Mucosa of descending colon (tissue), 3 donors: ENCODE measurements at regions of chr15 and their contacts with region 1.

Region 1: GRCh38 chr15:101264911-101265641 is 12.2 kb downstream of the SELENOS start:
- DNase-seq: no peak
- ATAC-seq: peak; percentile 11
- H3K4me3 ChIP-seq: no peak overlapping the region
- H3K4me1 ChIP-seq: no peaks in the 10 kb centered on the region
- CTCF ChIP-seq: no peak

Region 2: DNA sequence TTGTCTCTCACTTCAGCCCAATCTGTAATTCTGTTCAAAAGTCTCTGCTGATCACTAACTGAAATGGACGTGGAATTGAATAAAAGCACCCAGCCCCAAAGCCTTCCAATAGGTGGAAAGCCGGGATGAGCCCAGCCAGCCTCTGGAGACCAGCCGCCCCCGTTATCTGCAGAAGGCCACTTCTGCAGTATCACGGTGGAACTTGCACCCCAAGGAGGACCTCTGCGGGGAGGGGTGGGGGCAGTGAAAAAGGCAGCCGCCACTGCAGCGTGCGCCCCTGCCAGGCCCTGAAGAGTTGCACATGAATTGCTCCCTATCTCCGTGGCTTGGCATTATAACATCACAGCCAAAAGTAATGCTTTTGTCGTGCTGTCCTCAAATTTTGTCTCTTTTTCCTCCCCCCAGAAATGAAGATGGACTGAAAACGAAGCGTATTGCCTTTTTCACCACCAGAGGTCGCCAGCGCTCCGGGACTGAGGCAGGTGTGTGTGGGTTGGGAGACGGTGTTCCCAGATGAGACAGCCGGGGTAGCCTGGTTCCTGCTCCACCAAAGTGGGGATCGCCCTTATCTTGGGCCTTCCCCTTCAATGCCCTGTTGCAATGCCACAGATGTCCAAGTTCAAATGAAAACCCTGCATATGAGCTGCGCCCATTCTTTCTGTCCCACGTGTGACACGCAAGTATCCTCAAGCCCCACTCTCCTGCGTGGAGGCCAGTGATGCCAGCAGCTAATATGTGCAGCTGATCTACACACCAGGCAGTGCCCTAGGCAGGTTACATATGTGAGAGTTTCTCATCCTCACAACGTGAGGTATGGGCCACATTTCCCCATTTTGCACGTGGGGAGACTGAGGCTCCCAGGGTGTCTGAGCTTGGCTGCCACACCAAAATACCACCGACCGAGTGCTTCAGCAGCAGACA is 249.9 kb before region 1 on chr15:
- intact Hi-C with region 1: loop called in 1 of 2 experiments (anchors 5 kb)
- DNase-seq: peak in 2 of 3 donors; percentile 73 to 81
- ATAC-seq: peak; percentile 75
- H3K4me3 ChIP-seq: no peak overlapping the region
- H3K4me1 ChIP-seq: no peaks in the 10 kb centered on the region
- CTCF ChIP-seq: peak; percentile 63

Region 3: GRCh38 chr15:101088788-101089583 is 176.1 kb before region 1 on chr15:
- intact Hi-C with region 1: no loop called
- DNase-seq: peak; percentile 73 to 88 (median 88)
- ATAC-seq: peak; percentile 94
- H3K4me3 ChIP-seq: no peak overlapping the region
- H3K4me1 ChIP-seq: peaks cover 3% of the 10 kb centered on the region
- CTCF ChIP-seq: peak; percentile 99

Region 4: GRCh38 chr15:101206176-101206591 is 58.9 kb before region 1 on chr15:
- intact Hi-C with region 1: no loop called
- DNase-seq: no peak
- ATAC-seq: peak; percentile 37
- H3K4me3 ChIP-seq: no peak overlapping the region
- H3K4me1 ChIP-seq: peaks cover 16% of the 10 kb centered on the region
- CTCF ChIP-seq: no peak

Region 5: GRCh38 chr15:101296418-101297415 is 31.6 kb after region 1 on chr15:
- intact Hi-C with region 1: no loop called
- DNase-seq: no peak
- ATAC-seq: no peak
- H3K4me3 ChIP-seq: no peak overlapping the region
- H3K4me1 ChIP-seq: peaks cover 19% of the 10 kb centered on the region
- CTCF ChIP-seq: no peak